ENCODE measurements at regions of chr3 and their contacts with region 1.

Region 1: DNA sequence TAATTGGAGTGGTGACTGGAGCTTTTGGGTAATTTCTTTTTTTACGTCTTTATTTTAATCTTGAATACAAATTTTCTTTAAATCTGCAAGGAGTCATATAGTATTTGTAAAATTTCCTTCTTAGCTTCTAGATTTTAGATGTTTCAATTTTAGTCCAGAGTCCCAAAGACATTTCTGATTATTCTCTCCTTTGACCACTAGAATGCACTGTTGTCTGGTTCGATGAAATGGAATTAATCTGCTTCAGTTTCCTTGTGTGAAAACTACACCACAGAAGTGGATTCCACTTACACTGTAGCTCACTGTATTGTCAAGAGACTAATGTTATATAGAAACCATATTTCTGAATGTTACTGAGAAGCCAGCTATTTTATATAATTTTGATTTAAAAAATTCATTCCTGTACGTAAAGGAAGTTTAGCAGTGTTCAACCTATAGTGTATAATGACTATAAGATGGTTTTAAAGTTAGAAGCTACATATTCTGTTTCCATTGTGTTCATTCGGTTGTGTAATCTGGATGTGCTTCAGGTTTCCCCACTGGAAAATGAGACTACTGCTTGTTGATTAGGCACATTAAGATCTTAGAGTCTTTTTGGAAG is 6.1 kb downstream of the GRAMD1C start:
- DNase-seq: no peak
- ATAC-seq: peak in 1 of 4 donors; percentile 55
- H3K4me3 ChIP-seq: no peak overlapping the region
- H3K27ac ChIP-seq: no peak overlapping the region
- H3K4me1 ChIP-seq: no peaks in the 10 kb centered on the region
- H3K27me3 ChIP-seq: no peaks in the 10 kb centered on the region
- CTCF ChIP-seq: peak; percentile 53

Region 2: DNA sequence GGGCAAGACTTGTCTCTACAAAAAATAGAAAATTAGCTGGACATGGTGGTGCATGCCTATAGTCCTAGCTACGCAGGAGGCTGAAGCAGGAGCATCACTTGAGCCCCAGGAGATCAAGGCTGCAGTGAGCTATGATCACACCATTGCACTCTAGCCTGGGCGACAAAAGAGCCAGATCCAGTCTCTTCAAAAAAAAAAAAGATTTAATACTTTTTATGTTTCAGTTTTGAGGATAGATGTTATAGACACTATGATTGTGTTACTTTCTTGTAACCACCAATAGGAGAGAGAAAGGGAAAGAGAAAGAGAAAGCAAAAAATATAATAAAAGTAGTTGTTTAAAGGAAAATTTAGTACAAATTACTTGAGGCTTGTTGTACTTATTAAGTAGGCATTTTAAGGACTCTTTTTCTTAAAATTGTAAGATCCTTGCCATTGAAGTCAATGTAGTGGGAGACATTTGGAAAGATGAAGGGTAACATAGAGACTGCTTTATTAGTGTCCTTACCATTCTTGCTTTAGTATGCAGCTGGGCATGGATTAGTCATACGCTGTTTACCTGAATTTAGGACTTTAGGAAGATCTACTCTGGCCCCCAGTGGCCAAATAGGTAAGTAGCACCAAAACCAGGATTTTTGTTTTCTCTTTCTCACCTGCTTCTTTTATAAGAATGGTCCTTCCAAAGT is 68.0 kb after region 1 on chr3:
- intact Hi-C with region 1: loop called in 1 of 2 experiments (anchors 5 kb)
- DNase-seq: no peak
- ATAC-seq: peak in 3 of 4 donors; percentile 53 to 74 (median 60)
- H3K4me3 ChIP-seq: no peak overlapping the region
- H3K27ac ChIP-seq: no peak overlapping the region
- H3K4me1 ChIP-seq: no peaks in the 10 kb centered on the region
- H3K27me3 ChIP-seq: no peaks in the 10 kb centered on the region
- CTCF ChIP-seq: peak; percentile 51

Region 3: DNA sequence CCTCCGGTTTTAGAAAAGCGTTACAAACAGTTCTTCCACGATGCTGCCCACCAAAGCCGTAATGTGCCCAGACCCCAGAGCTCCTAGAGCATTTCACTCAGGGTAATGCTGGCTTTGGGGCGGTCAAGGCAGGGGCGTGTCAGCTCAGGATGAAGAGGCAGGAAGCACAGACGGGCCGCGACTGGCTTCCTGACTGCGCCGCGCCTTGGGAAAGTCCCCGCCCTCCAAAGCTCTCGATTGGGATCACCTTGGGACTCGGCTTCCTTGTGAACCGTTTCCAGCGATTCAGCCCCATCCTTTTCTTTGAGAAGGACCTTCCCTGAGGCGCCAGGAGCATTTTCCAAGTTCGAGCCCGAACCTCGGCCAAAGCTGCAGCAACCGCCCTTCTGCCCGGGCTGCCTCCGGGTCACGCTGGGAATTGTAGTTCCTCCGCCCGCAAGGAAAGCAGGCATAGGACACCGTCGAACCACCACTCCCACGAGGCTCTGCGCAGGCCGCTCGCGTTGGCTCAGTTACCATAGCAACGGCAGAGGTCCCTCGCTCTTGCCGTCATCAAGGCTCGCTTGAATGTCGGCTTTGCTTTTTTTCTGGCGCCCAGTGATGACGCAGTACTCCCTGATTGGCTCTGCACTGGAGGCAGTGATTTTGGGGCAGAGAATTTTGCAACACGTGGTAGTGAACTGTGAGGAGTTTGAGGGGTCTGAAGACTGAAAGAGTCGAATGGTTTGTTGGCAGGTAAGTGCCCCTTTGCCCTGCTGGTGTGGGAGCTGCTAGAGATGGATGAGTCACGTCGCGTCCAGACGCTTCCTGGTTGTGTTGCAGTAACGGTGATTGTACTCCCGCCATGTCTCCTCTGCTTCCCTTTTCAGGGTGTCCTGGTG is 211.6 kb after region 1 on chr3 and contains the starts of genes CCDC191 and QTRT2:
- intact Hi-C with region 1: loop called (anchors 5 to 10 kb)
- DNase-seq: peak; percentile 98 to 99
- ATAC-seq: peak; percentile 99 to 100 (median 100)
- H3K4me3 ChIP-seq: peak within 1 kb of the TSS; percentile 75
- H3K27ac ChIP-seq: peak within 1 kb of the TSS; percentile 74
- H3K4me1 ChIP-seq: peaks cover 25% of the 10 kb centered on the region
- H3K27me3 ChIP-seq: no peaks in the 10 kb centered on the region
- CTCF ChIP-seq: no peak
- total RNA-seq, gene CCDC191: 0.54 to 1.2 (median 0.78) TPM
- total RNA-seq, gene QTRT2: 7.4 to 9.6 (median 8.0) TPM